Naive thymus-derived CD4-positive, alpha-beta T cell (primary cell): ENCODE measurements at regions of chr17 and their contacts with region 1.

Region 1: GRCh38 chr17:65198653-65199382 is 61.6 kb downstream of the RGS9 start:
- DNase-seq: peak in 7 of 9 donors; percentile 36 to 67 (median 57)
- ATAC-seq: peak; percentile 79
- H3K4me3 ChIP-seq: no peak overlapping the region
- H3K4me3 Mint-ChIP-seq: no peak overlapping the region
- H3K27ac ChIP-seq: no peak overlapping the region
- H3K27ac Mint-ChIP-seq: no peak overlapping the region
- H3K4me1 ChIP-seq: no peaks in the 10 kb centered on the region
- H3K4me1 Mint-ChIP-seq: peaks cover 0 to 6% (median 0%) of the 10 kb centered on the region in 7 donors
- H3K27me3 ChIP-seq: no peaks in the 10 kb centered on the region
- H3K27me3 Mint-ChIP-seq: peaks cover 0 to 6% (median 0%) of the 10 kb centered on the region in 5 donors

Region 2: DNA sequence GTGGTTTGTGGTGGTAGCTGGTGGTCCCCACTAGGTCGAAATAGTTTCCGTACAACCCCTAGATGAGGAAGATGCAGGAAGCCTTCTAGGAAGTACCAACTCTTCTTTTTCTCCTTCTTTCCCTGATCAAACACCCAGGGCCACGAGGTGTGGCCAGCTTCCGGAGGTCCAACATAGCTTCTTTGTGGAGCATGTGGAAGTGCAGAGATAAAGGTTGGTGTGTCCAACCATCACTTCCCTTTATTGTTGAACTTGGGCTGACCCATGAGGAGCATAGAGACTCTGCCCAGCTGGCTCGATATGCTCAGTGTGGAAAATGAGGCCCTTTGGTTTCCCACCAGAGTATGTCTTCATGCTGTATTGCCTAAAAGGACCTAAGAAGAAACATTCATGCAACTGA is 68.0 kb before region 1 on chr17:
- CTCF ChIA-PET with region 1: no interaction called
- POLR2A ChIA-PET with region 1: no interaction called
- intact Hi-C with region 1: no loop called
- DNase-seq: no peak
- ATAC-seq: no peak
- H3K4me3 ChIP-seq: no peak overlapping the region
- H3K4me3 Mint-ChIP-seq: no peak overlapping the region
- H3K27ac ChIP-seq: no peak overlapping the region
- H3K27ac Mint-ChIP-seq: no peak overlapping the region
- H3K4me1 ChIP-seq: no peaks in the 10 kb centered on the region
- H3K4me1 Mint-ChIP-seq: peaks cover 0 to 7% (median 0%) of the 10 kb centered on the region in 7 donors
- H3K27me3 ChIP-seq: peaks cover 0 to 3% of the 10 kb centered on the region in 2 donors
- H3K27me3 Mint-ChIP-seq: peaks cover 0 to 51% (median 7%) of the 10 kb centered on the region in 5 donors

Region 3: DNA sequence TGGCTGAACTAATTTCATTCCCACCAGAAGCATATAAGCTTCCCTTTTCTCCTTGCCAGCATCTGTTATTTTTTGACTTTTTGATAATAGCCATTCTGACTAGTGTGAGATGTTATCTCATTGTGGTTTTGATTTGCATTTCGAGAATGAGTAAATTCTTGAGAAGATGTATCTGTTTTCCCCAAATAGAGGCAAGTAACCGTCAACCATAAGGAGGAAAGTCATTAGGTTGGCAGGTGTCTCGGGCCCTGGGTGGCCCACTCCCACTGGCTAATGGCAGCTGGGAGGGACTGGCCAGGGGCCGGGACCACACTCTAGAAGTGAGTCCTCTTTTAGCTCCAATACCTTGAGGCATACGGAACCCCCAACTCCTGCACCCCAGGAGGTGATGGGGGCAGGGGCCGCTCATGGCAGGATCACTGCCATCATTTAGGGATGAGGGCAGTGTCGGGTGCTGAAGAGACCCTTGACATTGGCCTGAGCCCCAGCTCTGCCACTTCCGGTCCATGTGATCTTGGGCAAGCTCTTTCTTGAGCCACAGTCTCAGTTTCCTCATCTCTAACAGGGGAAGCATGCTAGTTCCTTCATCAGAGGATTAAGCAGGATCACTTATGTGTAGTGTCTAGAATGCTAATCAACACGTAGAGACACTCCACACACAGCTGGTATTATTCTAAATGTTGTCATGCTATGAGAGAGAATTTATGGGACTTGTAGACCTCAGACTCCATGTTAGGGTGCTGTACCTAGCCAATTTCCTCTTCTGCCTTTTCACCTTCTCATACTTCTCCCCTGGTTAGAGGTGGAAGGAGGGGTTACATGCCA is 17.4 kb before region 1 on chr17:
- CTCF ChIA-PET with region 1: no interaction called
- POLR2A ChIA-PET with region 1: interaction called, 3 read pairs
- intact Hi-C with region 1: loop called in 1 of 2 experiments (anchors 2 kb)
- DNase-seq: peak in 1 of 9 donors; percentile 58
- ATAC-seq: peak; percentile 10
- H3K4me3 ChIP-seq: no peak overlapping the region
- H3K4me3 Mint-ChIP-seq: peak overlapping the region in 1 of 10 donors; percentile 64
- H3K27ac ChIP-seq: no peak overlapping the region
- H3K27ac Mint-ChIP-seq: peak overlapping the region in 1 of 9 donors; percentile 89
- H3K4me1 ChIP-seq: peaks cover 0 to 43% of the 10 kb centered on the region in 2 donors
- H3K4me1 Mint-ChIP-seq: peaks cover 0 to 78% (median 15%) of the 10 kb centered on the region in 7 donors
- H3K27me3 ChIP-seq: no peaks in the 10 kb centered on the region
- H3K27me3 Mint-ChIP-seq: peaks cover 0 to 10% (median 0%) of the 10 kb centered on the region in 5 donors